Natural killer cell (primary cell): ENCODE measurements at regions of chr14 and their contacts with region 1.

Region 1: GRCh38 chr14:71469936-71470335 is 462.3 kb upstream of the RGS6 start:
- DNase-seq: no peak
- ATAC-seq: no peak
- H3K4me3 ChIP-seq: no peak overlapping the region
- H3K4me3 Mint-ChIP-seq: no peak overlapping the region
- H3K27ac ChIP-seq: no peak overlapping the region
- H3K27ac Mint-ChIP-seq: no peak overlapping the region
- H3K4me1 ChIP-seq: no peaks in the 10 kb centered on the region
- H3K4me1 Mint-ChIP-seq: peaks cover 21 to 38% of the 10 kb centered on the region in 2 donors
- H3K27me3 ChIP-seq: no peaks in the 10 kb centered on the region
- H3K27me3 Mint-ChIP-seq: no peaks in the 10 kb centered on the region
- CTCF ChIP-seq: no peak

Region 2: DNA sequence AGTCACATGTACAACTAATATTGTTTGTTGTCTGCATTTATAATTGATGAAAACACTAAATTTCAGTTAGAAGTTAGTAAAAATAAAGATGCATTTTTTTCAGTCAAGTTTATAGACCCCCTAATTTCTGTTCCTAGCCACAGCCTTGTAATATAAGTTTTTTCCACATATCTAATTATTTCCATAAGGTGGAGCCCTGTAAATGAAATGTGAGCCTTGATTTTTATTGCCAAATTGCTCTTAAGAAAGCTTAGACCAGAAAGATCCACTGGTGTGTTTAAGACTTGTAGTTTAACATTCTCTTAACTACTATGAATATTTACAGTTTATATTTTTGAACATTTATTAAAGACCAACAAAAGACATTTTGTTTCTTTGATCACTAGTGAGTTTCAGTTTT is 140.2 kb after region 1 on chr14:
- intact Hi-C with region 1: no loop called
- DNase-seq: no peak
- ATAC-seq: no peak
- H3K4me3 ChIP-seq: no peak overlapping the region
- H3K4me3 Mint-ChIP-seq: no peak overlapping the region
- H3K27ac ChIP-seq: no peak overlapping the region
- H3K27ac Mint-ChIP-seq: no peak overlapping the region
- H3K4me1 ChIP-seq: peaks cover 10% of the 10 kb centered on the region
- H3K4me1 Mint-ChIP-seq: peaks cover 8 to 18% of the 10 kb centered on the region in 2 donors
- H3K27me3 ChIP-seq: no peaks in the 10 kb centered on the region
- H3K27me3 Mint-ChIP-seq: no peaks in the 10 kb centered on the region
- CTCF ChIP-seq: no peak

Region 3: GRCh38 chr14:71625891-71626701 is 156.2 kb after region 1 on chr14:
- intact Hi-C with region 1: no loop called
- DNase-seq: no peak
- ATAC-seq: no peak
- H3K4me3 ChIP-seq: no peak overlapping the region
- H3K4me3 Mint-ChIP-seq: no peak overlapping the region
- H3K27ac ChIP-seq: no peak overlapping the region
- H3K27ac Mint-ChIP-seq: no peak overlapping the region
- H3K4me1 ChIP-seq: no peaks in the 10 kb centered on the region
- H3K4me1 Mint-ChIP-seq: no peaks in the 10 kb centered on the region
- H3K27me3 ChIP-seq: no peaks in the 10 kb centered on the region
- H3K27me3 Mint-ChIP-seq: no peaks in the 10 kb centered on the region
- CTCF ChIP-seq: no peak

Region 4: DNA sequence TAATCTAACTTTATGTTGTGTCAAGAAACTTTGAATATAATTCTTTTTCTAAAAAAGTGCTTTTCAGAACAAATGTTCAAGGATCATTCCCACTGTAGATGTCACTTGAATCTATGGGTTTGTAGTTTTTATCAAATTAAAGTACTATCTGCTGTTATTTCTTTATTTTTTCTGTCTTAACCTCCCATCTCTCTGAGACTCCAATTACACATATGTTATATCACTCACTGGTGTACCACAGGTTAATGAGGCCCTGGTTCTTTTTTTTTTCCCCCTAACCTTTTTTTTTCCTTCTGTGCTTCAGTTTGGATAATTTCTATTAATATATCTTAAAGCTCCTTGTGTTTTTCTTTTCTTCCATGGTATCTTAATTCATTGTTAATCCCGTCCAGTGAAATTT is 182.4 kb after region 1 on chr14:
- intact Hi-C with region 1: loop called (anchors 2 kb)
- DNase-seq: no peak
- ATAC-seq: no peak
- H3K4me3 ChIP-seq: no peak overlapping the region
- H3K4me3 Mint-ChIP-seq: no peak overlapping the region
- H3K27ac ChIP-seq: no peak overlapping the region
- H3K27ac Mint-ChIP-seq: no peak overlapping the region
- H3K4me1 ChIP-seq: no peaks in the 10 kb centered on the region
- H3K4me1 Mint-ChIP-seq: no peaks in the 10 kb centered on the region
- H3K27me3 ChIP-seq: no peaks in the 10 kb centered on the region
- H3K27me3 Mint-ChIP-seq: no peaks in the 10 kb centered on the region
- CTCF ChIP-seq: no peak